ENCODE measurements at regions of chr5 and their contacts with region 1.

Region 1: DNA sequence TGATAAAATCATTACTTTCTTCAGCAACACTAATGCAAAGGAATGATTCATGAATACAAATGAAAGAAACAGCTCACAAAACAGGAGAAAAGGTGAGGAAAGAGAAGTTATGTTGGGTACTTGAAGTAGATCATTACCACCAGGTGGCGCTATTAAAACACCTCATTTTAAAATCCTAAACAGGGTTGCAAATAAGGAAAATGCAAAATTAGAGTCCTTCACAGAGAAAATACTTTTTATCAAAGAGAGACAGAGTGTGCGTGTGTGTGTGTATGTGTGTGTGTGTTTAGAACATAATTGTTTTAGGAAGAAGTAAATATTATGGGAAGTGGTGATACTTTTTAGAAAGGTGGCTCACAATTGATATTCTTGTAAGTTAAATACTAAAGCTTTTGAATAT is 49.5 kb upstream of the CD180 start:
- DNase-seq: peak; percentile 42
- H3K4me3 ChIP-seq: no peak overlapping the region
- H3K27ac ChIP-seq: peak overlapping the region; percentile 2
- H3K4me1 ChIP-seq: no peaks in the 10 kb centered on the region
- H3K27me3 ChIP-seq: no peaks in the 10 kb centered on the region
- CTCF ChIP-seq: peak; percentile 68

Region 2: GRCh38 chr5:67493676-67494075 is 247.6 kb after region 1 on chr5:
- intact Hi-C with region 1: loop called (anchors 10 kb)
- DNase-seq: peak; percentile 64
- H3K4me3 ChIP-seq: no peak overlapping the region
- H3K27ac ChIP-seq: no peak overlapping the region
- H3K4me1 ChIP-seq: no peaks in the 10 kb centered on the region
- H3K27me3 ChIP-seq: no peaks in the 10 kb centered on the region
- CTCF ChIP-seq: peak; percentile 41

Region 3: GRCh38 chr5:68252673-68253623 is 1006.8 kb after region 1 on chr5:
- intact Hi-C with region 1: loop called (anchors 10 kb)
- DNase-seq: peak; percentile 58
- H3K4me3 ChIP-seq: no peak overlapping the region
- H3K27ac ChIP-seq: peak overlapping the region; percentile 19
- H3K4me1 ChIP-seq: no peaks in the 10 kb centered on the region
- H3K27me3 ChIP-seq: no peaks in the 10 kb centered on the region
- CTCF ChIP-seq: peak; percentile 64